ENCODE measurements at regions of chr3 and their contacts with region 1.

Region 1: GRCh38 chr3:127544192-127544802 is 46.2 kb downstream of the TPRA1 start:
- DNase-seq: peak; percentile 52 to 55
- H3K4me3 ChIP-seq: no peak overlapping the region
- H3K27ac ChIP-seq: no peak overlapping the region
- H3K4me1 ChIP-seq: peaks cover 0 to 6% of the 10 kb centered on the region in 2 donors
- H3K27me3 ChIP-seq: no peaks in the 10 kb centered on the region
- CTCF ChIP-seq: peak; percentile 53 to 64 (median 58)
- POLR2A ChIP-seq: no peak

Region 2: DNA sequence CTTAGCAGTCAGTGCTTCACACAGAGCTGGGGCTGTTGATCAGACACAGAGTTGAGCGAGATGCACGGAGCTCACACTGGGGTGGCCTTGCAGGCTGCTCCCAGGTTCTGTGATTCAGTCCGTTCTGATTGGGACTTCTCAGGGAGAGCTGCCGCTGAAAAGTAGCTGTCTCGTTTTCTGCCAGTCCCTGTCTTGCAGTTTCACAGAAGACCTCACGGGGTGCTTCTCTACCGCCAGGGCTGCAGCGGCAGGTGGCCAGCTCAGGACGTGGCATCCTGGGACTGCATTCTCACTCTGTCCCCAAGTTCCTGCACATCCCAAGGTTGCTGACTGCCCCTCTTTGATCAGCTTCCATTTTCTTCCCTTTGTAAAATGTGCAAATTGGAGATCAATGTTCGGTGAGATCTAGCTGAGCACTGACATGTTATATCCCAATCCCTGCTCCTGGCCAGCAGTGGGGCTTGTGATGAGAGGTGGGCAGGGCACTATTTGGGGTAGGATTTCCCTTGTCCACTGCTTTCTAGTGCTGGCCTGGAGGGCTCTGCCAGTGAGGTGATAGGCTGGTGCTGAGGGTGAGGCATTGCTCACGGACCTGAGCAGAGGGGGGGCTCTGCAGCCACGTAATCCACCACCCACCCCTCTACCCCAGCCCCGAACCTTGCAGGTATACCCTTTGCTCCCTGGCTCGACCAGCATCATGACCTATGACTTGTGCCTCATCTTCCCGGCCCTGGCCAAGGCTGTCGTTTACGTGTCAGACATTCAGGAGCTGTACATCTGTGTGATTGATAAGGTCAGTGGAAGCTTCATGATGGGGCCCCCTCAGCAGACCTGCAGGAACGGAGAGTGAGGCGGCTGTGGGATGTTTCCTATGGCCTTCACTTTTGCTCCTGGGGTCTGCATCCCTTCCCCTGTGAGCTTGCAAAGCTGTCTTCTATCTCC is 884.1 kb before region 1 on chr3:
- intact Hi-C with region 1: loop called (anchors 10 kb)
- DNase-seq: no peak
- H3K4me3 ChIP-seq: no peak overlapping the region
- H3K27ac ChIP-seq: no peak overlapping the region
- H3K4me1 ChIP-seq: no peaks in the 10 kb centered on the region
- H3K27me3 ChIP-seq: no peaks in the 10 kb centered on the region
- CTCF ChIP-seq: no peak
- POLR2A ChIP-seq: no peak

Measured in uterus (tissue), 4 donors.